Caco-2 (cell line): ENCODE measurements at regions of chr17 and their contacts with region 1.

Region 1: GRCh38 chr17:1055751-1056645 is 59.1 kb downstream of the TIMM22 start:
- DNase-seq: peak; percentile 61 to 69
- H3K4me3 ChIP-seq: no peak overlapping the region
- H3K4me3 Mint-ChIP-seq: no peak overlapping the region
- H3K27ac Mint-ChIP-seq: no peak overlapping the region
- H3K4me1 ChIP-seq: no peaks in the 10 kb centered on the region
- H3K4me1 Mint-ChIP-seq: no peaks in the 10 kb centered on the region
- H3K27me3 ChIP-seq: no peaks in the 10 kb centered on the region
- H3K27me3 Mint-ChIP-seq: no peaks in the 10 kb centered on the region
- CTCF ChIP-seq: peak; percentile 63 to 86

Region 2: DNA sequence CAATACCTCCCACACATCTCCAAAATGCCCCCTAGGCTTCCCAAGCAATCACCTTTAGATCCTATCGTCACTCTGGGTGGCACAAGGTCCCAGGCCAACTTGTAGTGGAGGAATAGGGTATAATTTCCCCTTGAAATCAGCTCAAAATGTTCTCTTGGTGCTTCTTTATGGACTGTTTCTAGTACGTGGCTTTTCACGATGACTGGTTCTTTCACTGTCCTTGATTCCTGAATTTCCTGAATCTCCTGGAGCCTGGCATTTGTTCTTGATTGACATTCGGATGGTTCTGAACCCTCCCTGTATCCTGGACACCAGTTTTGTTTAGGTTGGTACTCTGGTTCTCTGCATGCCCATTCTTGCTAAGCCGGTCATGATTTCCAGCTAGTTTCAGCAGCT is 334.5 kb before region 1 on chr17:
- CTCF ChIA-PET with region 1: no interaction called
- POLR2A ChIA-PET with region 1: no interaction called
- intact Hi-C with region 1: no loop called
- DNase-seq: no peak
- H3K4me3 ChIP-seq: no peak overlapping the region
- H3K4me3 Mint-ChIP-seq: no peak overlapping the region
- H3K27ac Mint-ChIP-seq: no peak overlapping the region
- H3K4me1 ChIP-seq: no peaks in the 10 kb centered on the region
- H3K4me1 Mint-ChIP-seq: no peaks in the 10 kb centered on the region
- H3K27me3 ChIP-seq: no peaks in the 10 kb centered on the region
- H3K27me3 Mint-ChIP-seq: no peaks in the 10 kb centered on the region
- CTCF ChIP-seq: no peak

Region 3: GRCh38 chr17:915538-916201 is 140.3 kb before region 1 on chr17:
- CTCF ChIA-PET with region 1: no interaction called
- POLR2A ChIA-PET with region 1: no interaction called
- intact Hi-C with region 1: no loop called
- DNase-seq: no peak
- H3K4me3 ChIP-seq: no peak overlapping the region
- H3K4me3 Mint-ChIP-seq: no peak overlapping the region
- H3K27ac Mint-ChIP-seq: peak overlapping the region; percentile 38
- H3K4me1 ChIP-seq: peaks cover under 1% of the 10 kb centered on the region; the same call in 1 of the 2 replicates
- H3K4me1 Mint-ChIP-seq: peaks cover 25% of the 10 kb centered on the region
- H3K27me3 ChIP-seq: no peaks in the 10 kb centered on the region
- H3K27me3 Mint-ChIP-seq: no peaks in the 10 kb centered on the region
- CTCF ChIP-seq: no peak

Region 4: GRCh38 chr17:996554-997344 is 59.2 kb before region 1 on chr17 and contains the start of gene TIMM22:
- CTCF ChIA-PET with region 1: interaction called, 17 read pairs
- POLR2A ChIA-PET with region 1: no interaction called
- intact Hi-C with region 1: loop called (anchors 2 kb)
- DNase-seq: peak; percentile 97
- H3K4me3 ChIP-seq: peak within 1 kb of the TSS; percentile 87
- H3K4me3 Mint-ChIP-seq: peak within 1 kb of the TSS; percentile 97
- H3K27ac Mint-ChIP-seq: peak within 1 kb of the TSS; percentile 99
- H3K4me1 ChIP-seq: peaks cover 10% of the 10 kb centered on the region
- H3K4me1 Mint-ChIP-seq: peaks cover 11% of the 10 kb centered on the region
- H3K27me3 ChIP-seq: no peaks in the 10 kb centered on the region
- H3K27me3 Mint-ChIP-seq: no peaks in the 10 kb centered on the region
- CTCF ChIP-seq: peak; percentile 93 to 95
- total RNA-seq, gene TIMM22: 20.1 and 20.6 TPM in 2 replicates

Region 5: DNA sequence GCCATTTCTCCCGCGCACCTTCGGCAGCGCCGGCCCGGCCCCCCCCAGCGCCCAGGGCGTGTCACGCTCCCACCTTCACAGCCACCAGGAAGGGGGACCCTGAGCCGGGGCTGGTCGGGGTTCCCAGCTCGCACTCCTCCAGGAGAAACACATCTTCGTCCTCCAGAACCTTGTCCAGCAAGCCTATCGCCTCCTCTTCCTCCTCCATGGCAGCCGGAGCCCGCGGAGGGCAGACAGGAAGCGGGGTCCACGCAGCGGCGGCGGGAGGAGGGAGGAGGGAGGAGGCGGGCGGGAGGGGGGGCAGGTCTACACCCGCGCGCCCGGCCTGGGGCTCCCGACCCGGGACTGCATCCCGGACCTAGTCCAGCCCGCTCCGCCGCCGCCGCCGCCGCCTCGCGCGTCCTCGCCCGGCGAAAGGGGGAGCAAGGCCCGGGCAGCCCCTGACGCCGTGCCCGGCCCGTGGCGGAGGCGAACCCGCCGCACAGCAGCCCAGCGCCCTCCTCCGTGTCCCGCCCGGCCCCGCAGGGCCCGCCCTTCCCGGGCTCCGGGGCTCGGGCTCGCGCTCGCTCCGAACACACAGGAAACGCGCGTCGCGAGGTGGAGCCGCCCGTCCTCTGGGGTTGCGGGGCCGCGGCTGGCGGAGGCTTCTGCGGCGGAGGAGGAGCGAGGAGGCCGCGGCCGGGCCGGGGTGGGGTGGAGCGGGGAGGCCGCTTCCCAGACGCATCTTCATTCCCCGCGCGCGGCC is 53.0 kb after region 1 on chr17:
- CTCF ChIA-PET with region 1: interaction called, 11 read pairs
- POLR2A ChIA-PET with region 1: no interaction called
- intact Hi-C with region 1: no loop called
- DNase-seq: peak in 1 of 2 experiments; percentile 68
- H3K4me3 ChIP-seq: peak overlapping the region; percentile 92
- H3K4me3 Mint-ChIP-seq: peak overlapping the region; percentile 85
- H3K27ac Mint-ChIP-seq: peak overlapping the region; percentile 73
- H3K4me1 ChIP-seq: peaks cover 32% of the 10 kb centered on the region
- H3K4me1 Mint-ChIP-seq: peaks cover 21% of the 10 kb centered on the region
- H3K27me3 ChIP-seq: no peaks in the 10 kb centered on the region
- H3K27me3 Mint-ChIP-seq: no peaks in the 10 kb centered on the region
- CTCF ChIP-seq: no peak

Region 6: DNA sequence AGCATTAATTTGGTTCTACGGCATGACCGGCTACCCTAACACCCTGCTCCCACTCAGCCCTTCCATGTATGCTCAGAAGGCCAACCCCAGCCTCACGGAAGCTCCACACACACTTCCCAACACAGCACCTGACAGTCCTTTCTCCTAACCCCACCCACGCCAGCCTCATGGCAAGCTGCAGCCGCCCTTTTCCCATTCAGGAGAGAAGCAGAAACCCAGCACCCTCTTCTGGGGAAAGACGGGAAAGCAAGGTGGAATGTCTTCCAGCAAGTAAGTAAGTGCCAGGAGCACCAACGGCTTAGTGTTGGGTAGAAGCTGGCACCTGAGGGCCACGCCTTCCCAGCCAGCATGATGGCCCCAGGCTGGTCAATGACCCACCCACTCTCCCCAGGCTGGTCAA is 91.7 kb after region 1 on chr17:
- CTCF ChIA-PET with region 1: interaction called, 21 read pairs
- POLR2A ChIA-PET with region 1: no interaction called
- intact Hi-C with region 1: no loop called
- DNase-seq: peak; percentile 74 to 77
- H3K4me3 ChIP-seq: no peak overlapping the region
- H3K4me3 Mint-ChIP-seq: no peak overlapping the region
- H3K27ac Mint-ChIP-seq: no peak overlapping the region
- H3K4me1 ChIP-seq: no peaks in the 10 kb centered on the region
- H3K4me1 Mint-ChIP-seq: peaks cover 7% of the 10 kb centered on the region
- H3K27me3 ChIP-seq: no peaks in the 10 kb centered on the region
- H3K27me3 Mint-ChIP-seq: no peaks in the 10 kb centered on the region
- CTCF ChIP-seq: peak; percentile 44 to 68

Region 7: GRCh38 chr17:1186923-1187771 is 131.1 kb after region 1 on chr17:
- CTCF ChIA-PET with region 1: interaction called, 11 read pairs
- POLR2A ChIA-PET with region 1: no interaction called
- intact Hi-C with region 1: no loop called
- DNase-seq: peak; percentile 84 to 91
- H3K4me3 ChIP-seq: no peak overlapping the region
- H3K4me3 Mint-ChIP-seq: no peak overlapping the region
- H3K27ac Mint-ChIP-seq: no peak overlapping the region
- H3K4me1 ChIP-seq: peaks cover 6% of the 10 kb centered on the region; the same call in 1 of the 2 replicates
- H3K4me1 Mint-ChIP-seq: peaks cover 7% of the 10 kb centered on the region
- H3K27me3 ChIP-seq: no peaks in the 10 kb centered on the region
- H3K27me3 Mint-ChIP-seq: no peaks in the 10 kb centered on the region
- CTCF ChIP-seq: peak; percentile 95 to 98